ENCODE measurements at regions of chr10 and their contacts with region 1.

Region 1: DNA sequence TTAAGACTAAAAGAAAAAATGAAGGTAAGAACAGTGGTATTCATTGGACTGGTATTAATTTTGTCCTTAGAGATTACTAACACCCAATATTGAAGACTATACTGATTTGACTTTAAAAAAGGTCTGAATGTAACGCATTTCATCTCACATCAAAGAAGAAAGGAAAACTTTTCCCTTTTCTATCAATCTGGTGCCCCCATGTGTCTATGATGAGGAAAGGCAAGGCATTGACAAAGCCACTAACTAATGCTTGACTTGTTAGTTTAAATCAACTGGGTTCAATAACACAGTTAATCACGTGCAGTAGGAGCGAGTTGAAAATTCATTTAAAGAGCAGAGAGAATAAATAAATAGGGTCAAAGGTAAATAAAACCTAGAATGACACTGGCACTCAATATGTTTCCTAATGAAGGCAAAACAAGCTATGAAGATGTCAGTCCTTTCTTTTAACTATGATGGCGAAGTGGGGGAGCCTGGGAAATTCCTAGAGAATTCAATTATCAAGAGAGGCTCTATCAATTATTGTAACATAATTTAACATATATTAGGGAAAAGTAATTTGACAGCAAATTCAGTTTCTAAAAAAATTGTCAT is 180.9 kb downstream of the ANK3 start:
- DNase-seq: peak; percentile 18
- ATAC-seq: 0 out of 3 replicates have a peak, but pooled peaks have one; percentile 41
- H3K4me3 ChIP-seq: no peak overlapping the region
- H3K27ac ChIP-seq: no peak overlapping the region
- H3K4me1 ChIP-seq: no peaks in the 10 kb centered on the region
- H3K27me3 ChIP-seq: no peaks in the 10 kb centered on the region
- CTCF ChIP-seq: peak; percentile 64
- EP300 ChIP-seq: no peak
- POLR2A ChIP-seq: no peak
- RAD21 ChIP-seq: peak; percentile 32; the same call in 1 of the 2 replicates

Region 2: DNA sequence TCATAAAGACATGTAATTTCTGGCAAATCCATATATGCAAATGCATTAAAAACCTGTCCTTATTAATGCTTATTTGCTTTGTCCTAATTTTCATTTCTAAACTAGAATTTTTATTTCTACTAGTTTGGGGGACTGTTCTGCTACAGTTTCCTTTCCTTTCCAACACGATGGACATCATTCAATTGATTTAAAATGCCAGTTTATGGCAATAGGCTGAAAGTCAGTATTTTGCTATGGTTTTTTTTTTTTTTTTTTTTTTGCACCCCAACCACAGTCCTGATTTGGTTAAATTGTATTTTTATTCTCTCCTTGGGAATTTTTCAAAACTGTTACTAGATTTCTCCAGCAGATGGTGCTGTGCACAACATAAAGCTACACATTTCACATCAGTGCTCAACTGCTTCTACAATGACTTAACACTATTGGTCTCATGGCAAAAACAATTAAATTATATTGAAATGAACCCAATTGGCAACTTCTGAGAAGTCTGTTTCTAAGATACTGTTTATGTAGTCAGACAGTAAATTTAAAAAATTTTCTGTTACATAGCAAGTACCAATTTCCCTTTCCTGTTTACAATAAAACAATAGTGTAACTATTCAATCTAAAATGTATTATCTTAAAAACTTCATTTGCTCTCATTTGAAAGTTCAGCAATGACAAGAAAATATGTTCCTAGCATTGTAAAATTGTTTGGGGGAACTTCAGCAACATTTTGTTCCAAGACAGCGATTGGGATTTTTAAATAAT is 108.6 kb before region 1 on chr10:
- CTCF ChIA-PET with region 1: interaction called, 15 read pairs
- POLR2A ChIA-PET with region 1: no interaction called
- in situ Hi-C with region 1: loop called (anchors 5 kb)
- intact Hi-C with region 1: loop called (anchors 1 kb)
- DNase-seq: peak; percentile 39
- ATAC-seq: peak; percentile 49
- H3K4me3 ChIP-seq: no peak overlapping the region
- H3K27ac ChIP-seq: no peak overlapping the region
- H3K4me1 ChIP-seq: peaks cover 8% of the 10 kb centered on the region
- H3K27me3 ChIP-seq: no peaks in the 10 kb centered on the region
- CTCF ChIP-seq: peak; percentile 55
- EP300 ChIP-seq: no peak
- POLR2A ChIP-seq: no peak
- RAD21 ChIP-seq: no peak

Measured in HepG2 (cell line).